Right ventricle myocardium inferior (tissue), 1 donor: ENCODE measurements at regions of chr2 and their contacts with region 1.

Region 1: DNA sequence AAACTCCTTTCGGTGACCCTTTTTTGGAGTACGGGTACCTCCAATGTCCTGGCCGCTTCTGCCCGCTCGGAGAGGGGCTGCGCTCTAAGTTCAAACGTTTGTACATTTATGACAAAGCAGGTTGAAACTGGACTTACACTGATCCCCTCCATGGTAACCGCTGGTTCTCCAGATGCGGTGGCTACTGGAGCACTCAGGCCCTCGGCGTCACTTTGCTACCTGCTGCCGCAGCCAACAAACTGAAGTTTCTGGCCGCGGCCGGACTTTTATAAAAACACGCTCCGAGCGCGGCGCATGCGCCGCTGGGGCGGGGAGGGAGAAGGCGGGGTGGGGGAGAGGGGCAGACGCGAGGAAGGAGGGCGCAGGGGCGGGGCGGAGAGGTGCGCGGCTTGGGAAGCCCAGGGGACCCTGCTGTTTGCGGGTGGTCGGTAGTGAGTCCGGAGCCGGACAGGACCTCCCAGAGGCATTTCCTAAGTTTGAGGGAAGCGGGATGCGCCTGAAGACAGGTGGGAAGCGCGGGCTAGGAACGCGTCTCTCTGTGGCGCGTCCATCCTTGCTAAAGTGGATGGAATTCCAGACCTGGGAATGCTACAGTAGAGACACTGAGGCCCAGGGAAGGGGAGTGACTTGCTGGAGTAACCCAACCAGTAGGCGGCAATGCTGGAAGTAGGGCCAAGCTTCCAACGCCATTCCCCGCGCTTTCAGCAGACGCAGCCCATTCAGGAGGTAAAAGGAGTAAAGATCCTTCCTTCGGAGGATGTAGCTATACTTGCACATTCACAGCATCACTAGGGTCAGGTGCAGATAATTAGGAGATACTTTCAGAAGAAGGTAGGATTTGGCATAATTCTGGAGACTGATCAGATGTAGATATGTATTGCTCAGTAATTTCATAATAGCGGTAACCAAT is at the start of gene CXCR4:
- DNase-seq: peak; percentile 93
- ATAC-seq: peak; percentile 56
- total RNA-seq, gene CXCR4: 3.1 TPM

Region 2: DNA sequence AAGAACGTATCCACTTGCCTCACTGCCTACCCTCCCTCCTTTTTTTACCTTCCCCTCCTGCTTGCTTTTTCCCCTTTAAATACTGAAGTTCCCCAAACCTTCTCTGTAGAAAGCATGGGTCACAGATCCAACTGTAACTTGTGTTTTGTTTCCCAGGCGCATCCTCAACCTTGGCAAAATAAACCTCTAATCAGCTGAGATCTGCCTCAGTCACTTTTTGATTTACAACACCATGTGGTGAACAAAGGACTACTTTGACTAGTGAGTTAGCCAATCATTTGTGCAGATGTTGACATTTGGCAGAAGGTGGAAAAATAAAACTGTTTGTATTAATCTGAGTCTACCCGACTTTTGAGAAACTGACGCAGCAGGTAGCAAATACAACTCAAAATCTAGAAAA is 218.6 kb before region 1 on chr2:
- intact Hi-C with region 1: no loop called
- DNase-seq: no peak
- ATAC-seq: no peak

Region 3: DNA sequence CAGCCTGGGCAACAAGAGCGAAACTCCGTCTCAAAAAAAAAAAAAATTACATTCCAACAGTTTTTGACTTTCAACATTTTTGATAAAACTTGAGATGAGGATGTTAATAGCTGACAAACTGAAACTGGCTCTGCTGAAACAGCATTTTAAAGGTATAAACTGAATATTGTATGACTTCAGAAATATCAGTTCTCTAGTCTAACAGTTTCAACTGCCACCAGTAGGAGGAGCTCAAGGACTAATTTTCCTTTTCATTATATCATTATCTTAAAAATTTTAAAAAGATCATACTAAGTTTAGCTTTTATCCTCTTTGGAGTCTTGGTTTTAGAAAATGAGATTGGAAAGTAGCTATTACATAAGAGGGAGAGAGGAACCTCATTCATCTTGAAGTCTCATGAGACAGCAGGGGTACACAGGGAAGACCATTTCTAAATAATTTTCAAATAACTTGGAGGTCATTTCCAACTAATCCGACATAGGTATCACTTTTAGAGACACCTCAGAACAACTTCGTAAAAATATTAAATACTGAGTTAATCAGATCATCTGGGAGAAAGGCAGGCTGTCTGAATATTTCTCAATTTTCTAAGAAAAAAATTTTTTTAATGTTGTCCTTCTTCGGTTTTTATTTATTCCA is 204.3 kb before region 1 on chr2:
- intact Hi-C with region 1: loop called (anchors 10 kb)
- DNase-seq: no peak
- ATAC-seq: no peak

Region 4: DNA sequence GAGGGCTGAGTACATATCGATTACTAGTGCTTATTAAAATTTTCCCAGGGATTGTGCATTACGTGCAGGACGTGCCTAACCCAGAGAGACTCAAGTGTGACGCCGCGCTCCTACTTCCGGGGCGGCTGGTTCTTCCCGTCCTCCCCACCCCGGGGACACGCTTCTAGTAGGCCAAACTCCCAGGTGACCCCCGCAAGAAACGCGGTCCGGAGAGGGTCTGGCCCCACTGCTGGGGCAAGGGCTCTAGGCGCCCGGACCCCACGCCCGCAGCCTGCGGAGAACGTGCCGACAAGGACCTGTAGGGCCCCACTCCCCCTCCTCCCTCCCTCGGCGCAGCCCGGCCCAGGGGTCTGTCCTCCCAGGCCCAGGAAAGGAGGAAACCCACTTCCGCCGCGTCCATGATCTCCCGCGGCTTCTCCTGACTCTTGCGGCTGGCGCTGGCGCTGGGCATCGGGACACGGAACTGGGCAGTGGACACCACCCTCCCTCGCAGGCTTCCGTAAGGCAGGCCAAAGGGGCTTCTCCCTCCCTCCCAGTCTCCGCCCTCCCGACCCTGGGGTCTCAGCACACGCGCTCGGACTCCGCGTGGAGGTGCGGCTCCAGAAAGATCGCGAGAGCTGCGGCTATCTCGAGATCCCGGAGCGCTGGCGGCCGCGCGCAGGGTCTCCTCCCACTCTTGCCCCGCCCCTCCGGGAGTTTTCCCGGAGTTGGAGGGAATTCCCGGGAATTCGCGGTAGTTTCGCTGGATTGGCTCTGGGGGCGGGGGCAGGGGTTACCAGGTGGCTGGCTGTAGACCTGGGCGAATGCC is 132.9 kb before region 1 on chr2 and contains the start of gene DARS1:
- intact Hi-C with region 1: loop called (anchors 5 kb)
- DNase-seq: peak; percentile 95
- ATAC-seq: peak; percentile 97
- total RNA-seq, gene DARS1: 67.3 TPM

Region 5: GRCh38 chr2:136013955-136014354 is 104.2 kb before region 1 on chr2:
- intact Hi-C with region 1: loop called (anchors 5 kb)
- DNase-seq: no peak
- ATAC-seq: peak; percentile 67